ENCODE measurements at regions of chrX and their contacts with region 1.

Region 1: GRCh38 chrX:12701628-12702027 is 89.6 kb upstream of the PRPS2 start:
- DNase-seq: peak; percentile 3 to 16
- ATAC-seq: peak; percentile 23 to 44
- H3K4me3 ChIP-seq: no peak overlapping the region
- H3K27ac ChIP-seq: no peak overlapping the region
- H3K4me1 ChIP-seq: no peaks in the 10 kb centered on the region
- H3K27me3 ChIP-seq: no peaks in the 10 kb centered on the region
- CTCF ChIP-seq: peak in 2 of 5 experiments; percentile 7 to 40
- POLR2A ChIP-seq: no peak

Region 2: GRCh38 chrX:11787564-11787963 is 914.1 kb before region 1 on chrX:
- in situ Hi-C with region 1: no loop called
- intact Hi-C with region 1: loop called (anchors 5 kb)
- DNase-seq: peak; percentile 11 to 28
- ATAC-seq: peak in 1 of 2 donors; percentile 44
- H3K4me3 ChIP-seq: peak overlapping the region; percentile 22 to 36 (median 28)
- H3K27ac ChIP-seq: no peak overlapping the region
- H3K4me1 ChIP-seq: no peaks in the 10 kb centered on the region
- H3K27me3 ChIP-seq: no peaks in the 10 kb centered on the region
- CTCF ChIP-seq: peak in 4 of 5 experiments; percentile 13 to 45 (median 36)
- POLR2A ChIP-seq: no peak

Measured in gastrocnemius medialis (tissue), 4 donors.